ENCODE measurements at regions of chr6 and their contacts with region 1.

Region 1: GRCh38 chr6:149484733-149485700 is at the start of gene ZC3H12D:
- DNase-seq: peak; percentile 94
- H3K4me3 Mint-ChIP-seq: peak within 1 kb of the TSS; percentile 90
- H3K27ac Mint-ChIP-seq: peak within 1 kb of the TSS; percentile 100
- H3K4me1 Mint-ChIP-seq: peaks cover 60% of the 10 kb centered on the region
- H3K27me3 Mint-ChIP-seq: no peaks in the 10 kb centered on the region
- total RNA-seq, gene ZC3H12D: 79.6 and 79.8 TPM in 2 replicates

Region 2: DNA sequence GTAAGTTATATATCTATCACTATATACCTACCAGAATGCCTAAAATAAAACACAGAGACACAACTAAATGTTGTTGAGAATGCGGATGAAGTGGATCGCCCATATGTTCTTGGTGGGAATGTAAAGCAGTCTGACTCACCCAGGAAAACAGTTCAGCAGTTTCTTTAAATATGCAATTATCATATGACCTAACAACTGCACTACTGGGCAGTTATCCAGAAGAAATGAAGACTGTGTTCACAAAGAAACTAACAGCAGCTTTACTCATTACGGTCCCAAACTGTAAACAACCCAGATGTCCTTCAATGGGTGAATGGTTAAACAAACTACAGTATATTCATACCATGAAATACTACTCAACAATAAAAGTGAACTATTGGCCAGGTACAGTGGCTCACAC is 14.0 kb after region 1 on chr6:
- intact Hi-C with region 1: loop called (anchors 1 kb)
- DNase-seq: peak; percentile 38
- H3K4me3 Mint-ChIP-seq: no peak overlapping the region
- H3K27ac Mint-ChIP-seq: peak overlapping the region; percentile 48
- H3K4me1 Mint-ChIP-seq: peaks cover 63% of the 10 kb centered on the region
- H3K27me3 Mint-ChIP-seq: no peaks in the 10 kb centered on the region

Region 3: GRCh38 chr6:149508485-149508884 is 23.5 kb after region 1 on chr6:
- intact Hi-C with region 1: loop called (anchors 1 kb)
- DNase-seq: peak; percentile 83
- H3K4me3 Mint-ChIP-seq: peak overlapping the region; percentile 33
- H3K27ac Mint-ChIP-seq: peak overlapping the region; percentile 92
- H3K4me1 Mint-ChIP-seq: peaks cover 41% of the 10 kb centered on the region
- H3K27me3 Mint-ChIP-seq: no peaks in the 10 kb centered on the region

Region 4: DNA sequence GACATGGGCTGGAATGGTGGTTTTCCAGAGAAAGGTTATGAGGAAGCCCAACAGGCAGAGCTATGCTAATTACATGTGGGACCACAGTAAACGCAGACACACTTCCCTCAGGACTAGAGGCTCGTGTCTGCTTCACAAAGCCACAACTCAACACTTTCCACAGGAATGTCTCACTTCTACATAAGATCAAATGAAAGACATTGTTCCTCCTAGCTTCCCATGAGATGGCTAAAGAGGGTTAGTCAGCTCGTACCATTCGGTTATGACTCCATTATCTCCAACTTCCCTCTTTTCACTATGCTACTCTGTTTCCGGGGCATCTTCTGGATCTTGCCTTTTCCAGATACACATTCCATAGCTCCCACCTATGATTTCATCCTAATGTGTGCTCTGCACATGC is 28.9 kb after region 1 on chr6:
- intact Hi-C with region 1: loop called (anchors 1 kb)
- DNase-seq: peak; percentile 49
- H3K4me3 Mint-ChIP-seq: no peak overlapping the region
- H3K27ac Mint-ChIP-seq: peak overlapping the region; percentile 67
- H3K4me1 Mint-ChIP-seq: peaks cover 44% of the 10 kb centered on the region
- H3K27me3 Mint-ChIP-seq: no peaks in the 10 kb centered on the region